Naive thymus-derived CD8-positive, alpha-beta T cell (primary cell): ENCODE measurements at regions of chr20 and their contacts with region 1.

Region 1: GRCh38 chr20:57398231-57398821 is 7.1 kb downstream of the RBM38 start:
- DNase-seq: peak; percentile 88 to 98 (median 94)
- ATAC-seq: peak; percentile 74 to 81
- H3K4me3 Mint-ChIP-seq: peak overlapping the region; percentile 79 to 96 (median 89)
- H3K27ac Mint-ChIP-seq: peak overlapping the region; percentile 95 to 100 (median 98)
- H3K4me1 Mint-ChIP-seq: peaks cover 47 to 98% (median 97%) of the 10 kb centered on the region in 4 donors
- H3K27me3 Mint-ChIP-seq: no peaks in the 10 kb centered on the region

Region 2: GRCh38 chr20:57290749-57291402 is 107.5 kb before region 1 on chr20:
- POLR2A ChIA-PET with region 1: no interaction called
- DNase-seq: no peak
- ATAC-seq: no peak
- H3K4me3 Mint-ChIP-seq: no peak overlapping the region
- H3K27ac Mint-ChIP-seq: no peak overlapping the region
- H3K4me1 Mint-ChIP-seq: peaks cover 0 to 2% (median under 1%) of the 10 kb centered on the region in 4 donors
- H3K27me3 Mint-ChIP-seq: peaks cover 31 to 74% (median 48%) of the 10 kb centered on the region in 5 donors

Region 3: GRCh38 chr20:57301026-57301425 is 97.3 kb before region 1 on chr20:
- POLR2A ChIA-PET with region 1: no interaction called
- DNase-seq: no peak
- ATAC-seq: no peak
- H3K4me3 Mint-ChIP-seq: no peak overlapping the region
- H3K27ac Mint-ChIP-seq: no peak overlapping the region
- H3K4me1 Mint-ChIP-seq: no peaks in the 10 kb centered on the region
- H3K27me3 Mint-ChIP-seq: peaks cover 1 to 31% (median 8%) of the 10 kb centered on the region in 5 donors

Region 4: GRCh38 chr20:57383447-57384347 is 14.6 kb before region 1 on chr20:
- POLR2A ChIA-PET with region 1: interaction called, 218 read pairs
- DNase-seq: no peak
- ATAC-seq: no peak
- H3K4me3 Mint-ChIP-seq: no peak overlapping the region
- H3K27ac Mint-ChIP-seq: peak overlapping the region in 4 of 10 donors; percentile 4 to 65 (median 46)
- H3K4me1 Mint-ChIP-seq: peaks cover 3 to 26% (median 19%) of the 10 kb centered on the region in 4 donors
- H3K27me3 Mint-ChIP-seq: no peaks in the 10 kb centered on the region

Region 5: DNA sequence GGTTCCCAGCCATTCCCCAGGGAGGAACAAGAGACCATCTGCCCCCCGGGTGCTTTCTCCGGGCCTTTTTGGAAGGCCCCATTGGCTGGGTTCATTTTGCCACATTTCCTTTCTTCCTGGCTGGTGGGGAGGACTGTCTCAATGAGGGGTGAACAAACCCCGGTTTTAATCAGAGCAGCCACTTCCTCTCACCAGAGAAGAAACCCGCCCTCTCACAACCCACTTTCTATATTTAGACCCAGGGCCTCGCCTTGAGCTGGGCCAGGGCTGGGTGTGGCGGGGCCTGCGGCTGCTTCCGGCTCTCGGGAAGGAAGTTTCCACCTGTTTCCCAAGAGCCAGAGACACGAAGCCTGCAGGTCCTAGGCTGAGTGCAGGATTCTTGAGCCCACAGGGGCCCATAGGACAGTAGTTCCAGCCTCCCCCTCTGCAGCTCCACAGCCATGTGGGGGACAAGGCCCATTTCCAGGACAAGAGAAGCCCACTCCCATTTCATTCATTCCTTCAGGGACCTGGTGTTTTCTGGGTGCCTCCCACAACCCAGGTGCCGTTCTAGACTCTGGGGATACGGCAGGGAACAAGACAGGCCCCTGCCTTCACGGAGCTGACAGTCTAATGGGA is 34.7 kb after region 1 on chr20:
- POLR2A ChIA-PET with region 1: interaction called, 229 read pairs
- DNase-seq: peak; percentile 40 to 86 (median 64)
- ATAC-seq: peak; percentile 87 to 88
- H3K4me3 Mint-ChIP-seq: peak overlapping the region; percentile 57 to 88 (median 80)
- H3K27ac Mint-ChIP-seq: peak overlapping the region; percentile 66 to 94 (median 90)
- H3K4me1 Mint-ChIP-seq: peaks cover 39 to 77% (median 63%) of the 10 kb centered on the region in 4 donors
- H3K27me3 Mint-ChIP-seq: no peaks in the 10 kb centered on the region

Region 6: GRCh38 chr20:57473246-57474048 is 75.1 kb after region 1 on chr20:
- POLR2A ChIA-PET with region 1: interaction called, 20 read pairs
- DNase-seq: peak in 4 of 10 donors; percentile 12 to 64 (median 27)
- ATAC-seq: peak; percentile 81 to 83
- H3K4me3 Mint-ChIP-seq: peak overlapping the region; percentile 10 to 70 (median 47)
- H3K27ac Mint-ChIP-seq: peak overlapping the region; percentile 19 to 85 (median 74)
- H3K4me1 Mint-ChIP-seq: peaks cover 11 to 68% (median 35%) of the 10 kb centered on the region in 4 donors
- H3K27me3 Mint-ChIP-seq: no peaks in the 10 kb centered on the region

Region 7: DNA sequence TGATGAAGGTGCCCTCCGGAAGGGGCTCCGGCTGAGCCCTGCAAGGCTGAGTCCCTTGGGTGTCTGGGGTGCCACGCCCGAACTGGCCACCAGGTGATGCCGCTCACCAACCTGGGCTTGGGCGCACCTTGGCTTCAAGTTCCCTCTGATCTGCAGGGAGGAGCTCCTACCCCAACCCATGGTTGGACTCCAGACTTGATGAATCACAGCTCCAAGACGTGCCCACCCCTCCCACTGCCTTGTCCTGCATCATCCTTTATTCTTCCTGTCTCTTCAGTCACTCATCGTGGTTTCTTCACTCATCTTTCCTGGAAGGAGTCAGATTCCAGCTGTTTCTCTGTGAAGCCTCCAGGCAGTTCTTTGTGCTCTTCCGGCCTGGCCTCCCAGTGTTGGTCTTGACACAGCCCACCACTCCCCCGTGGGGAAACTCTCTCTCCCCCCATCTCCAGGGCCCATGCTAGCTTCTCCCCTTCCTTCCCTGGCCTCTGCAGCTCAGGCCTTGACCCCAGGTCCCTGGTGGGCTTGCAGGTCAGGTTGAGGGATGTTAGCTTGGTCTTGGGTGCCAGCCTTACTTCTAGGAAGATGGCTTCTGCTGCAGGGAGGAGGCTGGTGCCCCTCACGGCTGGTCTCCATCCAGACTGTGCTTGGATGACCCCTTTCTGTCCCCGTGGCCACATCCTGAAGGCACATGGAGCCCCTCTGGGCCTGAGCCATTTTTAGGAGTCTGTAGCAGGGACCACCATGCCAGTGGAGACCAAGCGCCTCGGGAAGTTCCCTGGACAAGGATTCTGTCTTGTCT is 224.5 kb after region 1 on chr20:
- POLR2A ChIA-PET with region 1: interaction called, 32 read pairs
- DNase-seq: peak; percentile 50 to 84 (median 62)
- ATAC-seq: peak; percentile 9 to 15
- H3K4me3 Mint-ChIP-seq: peak overlapping the region in 8 of 10 donors; percentile 14 to 89 (median 56)
- H3K27ac Mint-ChIP-seq: peak overlapping the region; percentile 60 to 90 (median 79)
- H3K4me1 Mint-ChIP-seq: peaks cover 34 to 93% (median 82%) of the 10 kb centered on the region in 4 donors
- H3K27me3 Mint-ChIP-seq: no peaks in the 10 kb centered on the region